Breast epithelium (tissue), 4 donors: ENCODE measurements at regions of chr1 and their contacts with region 1.

Region 1: DNA sequence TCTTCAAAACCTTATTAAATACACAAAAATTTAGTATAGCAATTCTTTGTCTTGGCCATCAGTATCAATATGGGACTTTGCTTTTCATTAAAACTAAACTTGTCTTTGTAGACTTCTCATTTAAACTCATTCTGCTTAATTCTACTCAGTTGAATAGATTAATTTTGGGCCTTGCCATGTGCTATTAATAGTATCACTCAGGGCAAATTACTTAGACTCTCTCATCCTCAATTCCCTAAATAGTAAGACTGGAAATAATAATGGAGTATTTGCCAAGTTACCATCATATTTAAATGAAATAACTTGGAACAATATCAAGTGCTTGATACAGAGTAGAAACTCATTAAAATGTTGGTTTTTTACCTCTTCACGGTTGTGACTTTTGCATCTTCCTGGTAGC is 13.4 kb downstream of the HOOK1 start:
- DNase-seq: no peak
- H3K4me3 ChIP-seq: no peak overlapping the region
- H3K27ac ChIP-seq: no peak overlapping the region
- H3K4me1 ChIP-seq: no peaks in the 10 kb centered on the region
- H3K27me3 ChIP-seq: no peaks in the 10 kb centered on the region
- CTCF ChIP-seq: no peak
- POLR2A ChIP-seq: no peak

Region 2: DNA sequence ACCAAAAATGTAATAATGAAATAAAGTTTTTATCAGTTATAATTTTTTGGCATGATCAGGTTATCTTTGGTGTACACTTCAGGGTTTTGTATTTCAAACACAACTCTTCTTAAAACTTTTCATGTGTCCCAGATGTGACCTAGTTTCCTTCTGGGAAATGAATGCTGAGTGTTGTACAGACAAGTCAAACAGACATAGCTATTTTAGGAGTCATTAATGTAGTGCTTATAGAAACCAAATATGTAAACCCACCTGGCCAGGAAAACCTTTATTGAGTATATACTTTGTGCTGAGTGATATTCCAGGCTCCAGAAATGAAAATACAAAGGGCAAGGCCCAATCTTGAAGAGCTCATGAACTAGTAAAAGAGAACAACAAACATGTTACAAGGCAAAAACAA is 39.3 kb before region 1 on chr1:
- intact Hi-C with region 1: loop called (anchors 2 kb)
- DNase-seq: no peak
- H3K4me3 ChIP-seq: no peak overlapping the region
- H3K27ac ChIP-seq: no peak overlapping the region
- H3K4me1 ChIP-seq: no peaks in the 10 kb centered on the region
- H3K27me3 ChIP-seq: no peaks in the 10 kb centered on the region
- CTCF ChIP-seq: no peak
- POLR2A ChIP-seq: no peak